ENCODE measurements at regions of chr9 and their contacts with region 1.

Region 1: DNA sequence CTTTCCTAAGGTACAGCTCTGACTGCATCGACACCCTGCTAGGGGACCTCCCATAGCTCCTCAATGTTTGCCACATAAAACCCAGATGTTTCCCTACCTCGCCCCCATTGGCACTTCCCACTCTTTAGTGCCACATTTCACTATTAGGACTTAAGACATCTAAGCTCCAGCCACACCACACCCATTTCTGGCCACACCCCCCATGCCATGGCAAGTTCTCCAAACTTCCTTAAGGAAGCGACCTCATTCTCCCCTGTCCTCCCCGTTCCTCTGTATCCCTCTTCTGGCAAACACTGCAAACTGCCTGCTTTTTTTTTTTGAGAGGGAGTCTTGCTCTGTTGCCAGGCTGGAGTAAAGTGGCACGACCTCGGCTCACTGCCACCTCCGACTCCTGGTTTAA is 62.9 kb downstream of the USP20 start:
- DNase-seq: no peak
- ATAC-seq: no peak
- H3K4me3 ChIP-seq: no peak overlapping the region
- H3K4me3 Mint-ChIP-seq: peak overlapping the region in 1 of 3 donors; percentile 22
- H3K27ac ChIP-seq: no peak overlapping the region
- H3K27ac Mint-ChIP-seq: peak overlapping the region; percentile 82 to 86
- H3K4me1 ChIP-seq: peaks cover 23 to 48% of the 10 kb centered on the region in 2 experiments
- H3K4me1 Mint-ChIP-seq: peaks cover 51 to 58% (median 52%) of the 10 kb centered on the region in 3 donors
- H3K27me3 ChIP-seq: no peaks in the 10 kb centered on the region
- H3K27me3 Mint-ChIP-seq: no peaks in the 10 kb centered on the region

Region 2: DNA sequence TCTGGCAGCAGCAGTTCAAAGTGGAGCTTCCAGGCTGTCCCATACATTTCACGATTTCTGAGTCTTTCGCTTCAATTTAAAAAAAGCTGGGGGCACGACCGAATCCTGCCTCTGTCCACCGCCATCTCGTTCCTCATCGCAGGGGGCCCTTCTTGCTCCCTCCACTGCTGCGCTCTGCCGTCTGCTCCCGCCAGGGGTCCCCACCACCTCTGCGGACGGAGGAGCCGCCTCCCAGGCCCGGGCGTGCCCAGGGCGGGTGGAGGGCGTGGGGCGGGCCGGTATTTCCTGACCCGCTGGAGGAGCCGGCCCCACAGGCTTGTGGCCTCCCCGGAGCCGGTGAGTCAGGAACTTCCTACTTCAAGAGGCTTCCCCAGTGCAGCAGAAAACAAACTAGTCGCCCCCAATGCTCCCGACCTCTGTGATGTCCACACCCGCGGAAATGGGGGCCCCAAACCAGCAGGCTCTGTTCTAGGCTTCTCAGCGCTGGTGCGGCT is 12.5 kb before region 1 on chr9:
- CTCF ChIA-PET with region 1: interaction called, 5 to 12 read pairs
- POLR2A ChIA-PET with region 1: interaction called, 11 to 12 read pairs
- DNase-seq: peak; percentile 67 to 92 (median 81)
- ATAC-seq: peak; percentile 14 to 41 (median 38)
- H3K4me3 ChIP-seq: peak overlapping the region; percentile 62 to 90
- H3K4me3 Mint-ChIP-seq: peak overlapping the region; percentile 83 to 95 (median 85)
- H3K27ac ChIP-seq: peak overlapping the region; percentile 99
- H3K27ac Mint-ChIP-seq: peak overlapping the region; percentile 98 to 99
- H3K4me1 ChIP-seq: peaks cover 42 to 75% of the 10 kb centered on the region in 2 experiments
- H3K4me1 Mint-ChIP-seq: peaks cover 64 to 73% (median 68%) of the 10 kb centered on the region in 3 donors
- H3K27me3 ChIP-seq: no peaks in the 10 kb centered on the region
- H3K27me3 Mint-ChIP-seq: no peaks in the 10 kb centered on the region

Measured in T-cell (primary cell).